ENCODE measurements at regions of chr2 and their contacts with region 1.

Region 1: DNA sequence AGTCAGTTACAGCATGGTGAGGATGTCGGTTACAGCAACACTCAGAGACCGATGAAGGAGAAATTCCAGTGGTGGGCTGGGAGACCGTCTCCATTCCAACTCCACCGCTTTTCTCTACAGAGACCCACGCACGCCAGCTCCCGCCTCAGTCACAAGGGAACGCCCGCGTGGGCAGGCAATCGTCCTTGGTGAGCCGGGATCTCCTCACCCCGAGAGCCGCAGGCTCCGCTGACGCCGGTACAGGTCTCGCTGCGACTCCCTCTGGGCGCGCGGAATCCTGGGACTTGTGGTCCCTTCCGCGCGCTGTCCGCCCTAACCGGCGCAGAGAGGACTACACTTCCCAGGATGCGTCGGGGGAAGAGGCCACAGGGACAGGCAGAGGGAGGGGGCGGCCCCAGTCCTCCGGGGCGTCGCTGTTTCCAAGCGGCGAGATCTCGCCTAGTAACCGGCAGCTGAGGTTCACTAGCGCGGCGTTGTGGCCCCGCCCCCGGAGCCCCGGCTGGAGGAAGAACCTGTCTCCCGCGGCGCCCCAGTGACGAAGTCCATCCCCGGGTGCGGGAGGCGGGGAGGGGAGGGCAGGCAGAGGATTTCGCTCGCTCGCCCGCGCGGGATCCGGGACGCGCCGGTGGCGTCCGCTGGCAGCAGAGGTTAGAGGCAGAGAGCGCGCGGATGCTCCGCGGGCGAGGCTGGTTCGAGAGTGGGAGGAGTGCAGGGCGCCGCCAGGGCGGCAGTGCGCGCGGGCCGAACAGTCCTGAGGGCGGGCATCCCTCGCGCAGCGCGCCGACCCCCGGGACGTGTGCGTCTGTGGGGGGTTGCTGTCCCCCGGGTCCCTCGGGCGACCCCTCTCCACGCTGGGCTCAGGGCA is at the start of gene EML6:
- DNase-seq: peak; percentile 94 to 99 (median 98)
- ATAC-seq: peak; percentile 96
- H3K4me3 ChIP-seq: peak within 1 kb of the TSS; percentile 81
- H3K4me3 Mint-ChIP-seq: peak within 1 kb of the TSS; percentile 90
- H3K27ac ChIP-seq: peak within 1 kb of the TSS in 1 of 2 donors; percentile 49
- H3K27ac Mint-ChIP-seq: peak within 1 kb of the TSS; percentile 28
- H3K4me1 ChIP-seq: peaks cover 22% of the 10 kb centered on the region
- H3K4me1 Mint-ChIP-seq: peaks cover 21% of the 10 kb centered on the region
- H3K27me3 ChIP-seq: peaks cover 16 to 17% of the 10 kb centered on the region in 2 experiments
- H3K27me3 Mint-ChIP-seq: peaks cover 66% of the 10 kb centered on the region
- CTCF ChIP-seq: no peak
- total RNA-seq, gene EML6: 0.22 to 0.34 TPM

Region 2: GRCh38 chr2:53970724-53971602 is 752.4 kb before region 1 on chr2 and contains the start of gene PSME4:
- CTCF ChIA-PET with region 1: no interaction called
- POLR2A ChIA-PET with region 1: no interaction called
- intact Hi-C with region 1: loop called in 1 of 2 experiments (anchors 10 kb)
- DNase-seq: peak; percentile 85 to 98 (median 94)
- ATAC-seq: peak; percentile 88
- H3K4me3 ChIP-seq: peak within 1 kb of the TSS; percentile 79
- H3K4me3 Mint-ChIP-seq: peak within 1 kb of the TSS; percentile 98
- H3K27ac ChIP-seq: peak within 1 kb of the TSS; percentile 81 to 82
- H3K27ac Mint-ChIP-seq: peak within 1 kb of the TSS; percentile 90
- H3K4me1 ChIP-seq: peaks cover 43% of the 10 kb centered on the region
- H3K4me1 Mint-ChIP-seq: peaks cover 58% of the 10 kb centered on the region
- H3K27me3 ChIP-seq: no peaks in the 10 kb centered on the region
- H3K27me3 Mint-ChIP-seq: no peaks in the 10 kb centered on the region
- CTCF ChIP-seq: no peak
- total RNA-seq, gene PSME4: 82.6 to 87.0 TPM

Region 3: GRCh38 chr2:54522624-54523281 is 200.6 kb before region 1 on chr2:
- CTCF ChIA-PET with region 1: no interaction called
- POLR2A ChIA-PET with region 1: no interaction called
- intact Hi-C with region 1: loop called in 1 of 2 experiments (anchors 5 kb)
- DNase-seq: peak; percentile 48 to 90 (median 59)
- ATAC-seq: peak; percentile 100
- H3K4me3 ChIP-seq: no peak overlapping the region
- H3K4me3 Mint-ChIP-seq: no peak overlapping the region
- H3K27ac ChIP-seq: no peak overlapping the region
- H3K27ac Mint-ChIP-seq: no peak overlapping the region
- H3K4me1 ChIP-seq: peaks cover 3% of the 10 kb centered on the region
- H3K4me1 Mint-ChIP-seq: peaks cover 5% of the 10 kb centered on the region
- H3K27me3 ChIP-seq: no peaks in the 10 kb centered on the region
- H3K27me3 Mint-ChIP-seq: no peaks in the 10 kb centered on the region
- CTCF ChIP-seq: peak; percentile 77

Region 4: GRCh38 chr2:54838585-54839035 is 115.2 kb after region 1 on chr2:
- CTCF ChIA-PET with region 1: interaction called, 4 read pairs
- POLR2A ChIA-PET with region 1: interaction called, 4 read pairs
- intact Hi-C with region 1: loop called in 1 of 2 experiments (anchors 5 kb)
- DNase-seq: peak; percentile 37 to 82 (median 54)
- ATAC-seq: peak; percentile 73
- H3K4me3 ChIP-seq: no peak overlapping the region
- H3K4me3 Mint-ChIP-seq: no peak overlapping the region
- H3K27ac ChIP-seq: no peak overlapping the region
- H3K27ac Mint-ChIP-seq: no peak overlapping the region
- H3K4me1 ChIP-seq: no peaks in the 10 kb centered on the region
- H3K4me1 Mint-ChIP-seq: no peaks in the 10 kb centered on the region
- H3K27me3 ChIP-seq: no peaks in the 10 kb centered on the region
- H3K27me3 Mint-ChIP-seq: no peaks in the 10 kb centered on the region
- CTCF ChIP-seq: peak; percentile 92

Region 5: DNA sequence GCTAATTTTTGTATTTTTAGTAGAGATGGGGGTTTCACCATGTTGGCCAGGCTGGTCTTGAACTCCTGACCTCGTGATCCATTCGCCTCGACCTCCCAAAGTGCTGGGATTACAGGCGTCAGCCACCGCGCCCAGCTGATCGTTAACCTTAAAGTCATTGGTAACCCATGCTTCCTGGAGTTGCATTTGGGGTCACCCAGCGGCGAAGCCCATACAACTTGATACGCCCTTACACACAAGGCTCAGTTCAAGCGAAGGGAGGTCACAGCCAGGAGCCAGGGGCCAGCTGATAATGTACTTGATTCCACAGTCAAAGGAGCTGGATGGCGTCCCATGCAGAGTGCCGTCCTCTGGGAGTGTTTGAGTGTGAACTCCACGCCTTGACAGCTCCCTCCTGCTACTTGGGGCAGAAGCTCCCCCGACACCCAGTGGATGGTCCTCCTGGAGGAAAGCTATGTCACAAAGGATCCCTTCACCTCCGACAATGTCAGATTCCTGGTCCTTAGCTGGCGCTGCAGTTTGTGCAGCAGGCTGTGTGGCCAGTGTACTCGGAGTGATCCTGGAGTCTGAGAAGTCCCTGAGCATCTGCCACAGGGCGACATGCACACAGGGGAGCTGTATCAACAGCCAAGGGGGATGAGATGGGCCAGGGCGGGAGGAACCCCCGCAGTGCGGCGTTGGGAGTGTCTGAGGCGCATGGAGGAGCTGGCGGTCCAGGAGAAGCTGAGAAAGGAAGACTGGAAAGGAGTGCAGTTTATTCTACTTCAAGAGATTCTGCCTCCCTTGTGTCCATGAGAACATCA is 500.8 kb after region 1 on chr2:
- CTCF ChIA-PET with region 1: no interaction called
- POLR2A ChIA-PET with region 1: no interaction called
- intact Hi-C with region 1: loop called in 1 of 2 experiments (anchors 5 kb)
- DNase-seq: peak in 3 of 14 experiments; percentile 9 to 46 (median 34)
- ATAC-seq: no peak
- H3K4me3 ChIP-seq: peak overlapping the region; percentile 53
- H3K4me3 Mint-ChIP-seq: peak overlapping the region; percentile 87
- H3K27ac ChIP-seq: peak overlapping the region in 1 of 2 donors; percentile 80
- H3K27ac Mint-ChIP-seq: peak overlapping the region; percentile 86
- H3K4me1 ChIP-seq: peaks cover 14% of the 10 kb centered on the region
- H3K4me1 Mint-ChIP-seq: peaks cover 42% of the 10 kb centered on the region
- H3K27me3 ChIP-seq: no peaks in the 10 kb centered on the region
- H3K27me3 Mint-ChIP-seq: no peaks in the 10 kb centered on the region
- CTCF ChIP-seq: no peak

Region 6: DNA sequence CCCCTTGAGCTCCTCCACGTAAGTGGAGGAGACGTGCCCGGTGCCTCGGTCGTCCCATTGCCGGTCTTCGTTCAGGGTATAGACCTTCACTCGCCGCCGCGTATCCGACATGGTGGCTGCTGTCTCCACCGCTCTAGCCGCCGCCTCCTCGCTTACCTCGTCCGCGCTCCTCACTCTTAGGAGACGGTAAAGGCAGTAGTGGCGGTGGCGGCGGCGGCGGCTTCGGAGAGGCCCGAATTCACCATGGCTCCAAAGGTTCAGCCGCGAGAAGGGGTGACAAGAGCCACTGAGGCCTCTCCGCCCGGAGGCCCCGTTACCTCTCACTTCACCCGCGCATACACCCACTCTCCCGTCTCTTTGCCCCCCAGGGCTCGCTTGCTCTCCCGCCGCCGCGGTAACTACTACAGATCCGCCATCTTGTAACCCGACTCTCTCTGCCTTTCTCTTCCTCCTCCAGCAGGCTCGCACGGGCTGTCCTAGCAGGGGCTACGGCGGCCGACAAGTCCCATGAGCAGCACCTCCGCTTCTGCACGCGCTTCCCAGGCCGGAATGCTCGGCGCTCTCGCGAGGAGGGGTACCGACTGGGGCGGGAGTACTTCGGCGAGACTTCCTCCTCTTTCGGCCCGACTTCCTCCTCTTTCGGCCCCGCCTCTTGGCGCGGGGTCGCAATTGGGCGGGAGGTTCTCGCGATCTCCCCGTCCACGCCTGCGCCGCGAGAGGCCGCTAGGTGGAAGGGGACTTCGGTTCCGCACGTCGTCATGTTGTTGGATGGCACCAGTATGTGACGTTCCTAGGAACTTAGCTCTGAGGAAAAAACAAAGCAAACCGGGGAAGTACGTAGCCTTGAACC is 894.0 kb after region 1 on chr2 and contains the start of gene PPP4R3B:
- CTCF ChIA-PET with region 1: no interaction called
- POLR2A ChIA-PET with region 1: interaction called, 4 read pairs
- intact Hi-C with region 1: loop called (anchors 5 kb)
- DNase-seq: peak; percentile 97 to 100 (median 98)
- ATAC-seq: peak; percentile 80
- H3K4me3 ChIP-seq: peak within 1 kb of the TSS; percentile 82
- H3K4me3 Mint-ChIP-seq: no peak within 1 kb of the TSS
- H3K27ac ChIP-seq: peak within 1 kb of the TSS; percentile 98 to 99
- H3K27ac Mint-ChIP-seq: no peak within 1 kb of the TSS
- H3K4me1 ChIP-seq: peaks cover 37% of the 10 kb centered on the region
- H3K4me1 Mint-ChIP-seq: peaks cover 61% of the 10 kb centered on the region
- H3K27me3 ChIP-seq: no peaks in the 10 kb centered on the region
- H3K27me3 Mint-ChIP-seq: no peaks in the 10 kb centered on the region
- CTCF ChIP-seq: peak; percentile 35
- total RNA-seq, gene PPP4R3B: 47.7 to 50.3 TPM